ENCODE measurements at regions of chr7 and their contacts with region 1.

Region 1: DNA sequence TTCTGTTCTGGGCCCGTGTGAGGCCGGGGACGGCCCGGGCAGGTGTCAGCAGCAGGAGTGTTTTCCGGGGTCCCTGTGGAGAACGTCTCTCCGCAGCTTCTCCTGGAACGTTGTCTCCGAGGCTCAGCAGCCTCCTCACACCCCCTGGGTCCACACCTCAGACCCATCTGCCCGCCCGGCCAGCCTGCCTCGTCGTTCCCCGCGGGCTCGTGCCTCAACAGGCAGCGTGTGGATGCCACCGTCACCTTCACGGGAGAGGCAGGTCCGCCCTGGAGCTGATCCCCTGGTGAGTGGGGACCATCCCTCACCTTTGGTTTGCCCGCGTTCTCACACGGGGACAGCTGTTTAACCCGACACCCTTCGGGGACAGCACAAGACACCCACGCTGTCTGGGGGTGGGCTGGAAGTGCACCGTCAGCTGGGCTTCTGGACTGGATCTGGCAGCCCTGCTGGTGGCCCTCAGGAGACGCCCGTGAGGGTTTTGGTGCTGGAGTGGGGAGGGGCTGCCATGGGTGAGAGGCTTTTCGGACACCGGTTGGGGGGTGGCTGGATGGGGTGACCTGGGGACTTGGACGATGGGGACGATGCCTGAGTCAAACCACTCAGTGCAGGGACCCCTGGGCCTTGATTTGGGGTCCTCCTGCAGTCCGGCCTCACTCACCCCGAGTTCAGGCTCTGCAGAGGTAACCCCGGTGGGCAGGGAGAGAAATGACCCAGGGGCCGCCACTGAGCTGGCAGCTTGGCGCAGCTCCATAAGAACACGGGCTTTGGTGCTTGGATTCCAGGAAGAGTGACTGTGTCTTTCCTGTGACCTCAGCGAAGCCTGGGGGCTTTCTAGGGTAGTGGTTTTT is 131.7 kb downstream of the DNAJB6 start:
- DNase-seq: peak in 1 of 2 experiments; percentile 41
- H3K4me3 ChIP-seq: no peak overlapping the region
- H3K27ac ChIP-seq: no peak overlapping the region
- H3K4me1 ChIP-seq: peaks cover 0 to 9% (median 5%) of the 10 kb centered on the region in 4 experiments; a peak in 4 of 7 replicates
- H3K27me3 ChIP-seq: peaks cover 0 to 11% (median 1%) of the 10 kb centered on the region in 4 experiments; a peak in 3 of 7 replicates
- CTCF ChIP-seq: no peak
- EP300 ChIP-seq: no peak
- POLR2A ChIP-seq: no peak
- RAD21 ChIP-seq: no peak

Region 2: GRCh38 chr7:157318012-157318709 is 150.3 kb before region 1 on chr7:
- CTCF ChIA-PET with region 1: no interaction called
- POLR2A ChIA-PET with region 1: no interaction called
- DNase-seq: no peak
- H3K4me3 ChIP-seq: no peak overlapping the region
- H3K27ac ChIP-seq: peak overlapping the region; percentile 48; the same call in 1 of the 2 replicates
- H3K4me1 ChIP-seq: peaks cover 0 to 9% (median 3%) of the 10 kb centered on the region in 4 experiments; a peak in 6 of 7 replicates
- H3K27me3 ChIP-seq: no peaks in the 10 kb centered on the region
- CTCF ChIP-seq: no peak
- EP300 ChIP-seq: no peak
- POLR2A ChIP-seq: no peak
- RAD21 ChIP-seq: no peak

Region 3: GRCh38 chr7:157412021-157412443 is 56.5 kb before region 1 on chr7:
- CTCF ChIA-PET with region 1: no interaction called
- POLR2A ChIA-PET with region 1: no interaction called
- DNase-seq: no peak
- H3K4me3 ChIP-seq: no peak overlapping the region
- H3K27ac ChIP-seq: no peak overlapping the region
- H3K4me1 ChIP-seq: peaks cover 5 to 16% (median 10%) of the 10 kb centered on the region in 4 experiments
- H3K27me3 ChIP-seq: no peaks in the 10 kb centered on the region
- CTCF ChIP-seq: no peak
- EP300 ChIP-seq: no peak
- POLR2A ChIP-seq: no peak
- RAD21 ChIP-seq: no peak

Region 4: DNA sequence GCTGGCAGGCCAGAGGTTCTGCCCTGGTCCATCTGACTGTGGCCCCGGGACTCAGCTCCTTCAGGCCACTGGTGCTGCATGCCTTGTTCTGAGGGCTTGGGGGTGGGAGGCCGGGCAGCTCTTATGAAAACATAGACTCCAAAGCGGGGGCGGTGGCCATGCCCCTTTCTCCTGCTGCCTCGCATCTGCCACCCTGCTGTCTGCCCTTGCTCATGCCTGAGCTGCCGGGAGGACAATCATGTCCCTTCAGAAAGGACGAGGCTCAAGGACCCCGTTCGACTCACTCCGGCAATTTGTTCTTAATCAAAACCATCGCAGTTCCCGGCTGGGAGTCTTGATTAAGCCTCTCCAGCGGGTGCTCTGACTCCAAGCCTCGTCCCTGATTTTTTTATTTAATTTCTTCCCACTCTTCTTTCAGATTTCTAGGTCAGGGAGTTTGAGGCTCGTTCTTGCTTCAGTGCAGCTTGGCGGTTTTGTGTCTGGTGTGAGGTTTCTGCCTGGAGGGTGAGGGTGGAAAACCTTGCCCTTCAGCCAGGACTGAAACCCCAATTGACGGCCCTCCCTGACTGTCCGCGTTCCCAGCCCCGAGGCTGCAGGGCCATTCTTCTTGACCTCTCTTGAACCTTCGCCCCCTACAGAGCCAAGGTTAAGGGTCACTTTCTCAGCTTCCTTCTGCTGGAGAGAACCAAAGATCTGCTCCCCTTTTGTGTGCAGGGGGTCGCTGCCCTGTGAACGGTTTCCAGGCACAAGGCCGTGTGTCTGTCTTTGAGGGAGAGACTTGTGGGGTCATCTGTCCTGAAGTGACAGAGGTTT is 10.8 kb before region 1 on chr7:
- CTCF ChIA-PET with region 1: interaction called, 12 read pairs
- POLR2A ChIA-PET with region 1: no interaction called
- DNase-seq: peak in 1 of 2 experiments; percentile 42
- H3K4me3 ChIP-seq: no peak overlapping the region
- H3K27ac ChIP-seq: no peak overlapping the region
- H3K4me1 ChIP-seq: peaks cover 0 to 3% (median 0%) of the 10 kb centered on the region in 4 experiments; a peak in 1 of 7 replicates
- H3K27me3 ChIP-seq: no peaks in the 10 kb centered on the region; a peak in 3 of 7 replicates
- CTCF ChIP-seq: no peak
- EP300 ChIP-seq: no peak
- POLR2A ChIP-seq: no peak
- RAD21 ChIP-seq: no peak

Measured in H1 (cell line).